HEK293T (cell line): ENCODE measurements at regions of chr1 and their contacts with region 1.

Region 1: DNA sequence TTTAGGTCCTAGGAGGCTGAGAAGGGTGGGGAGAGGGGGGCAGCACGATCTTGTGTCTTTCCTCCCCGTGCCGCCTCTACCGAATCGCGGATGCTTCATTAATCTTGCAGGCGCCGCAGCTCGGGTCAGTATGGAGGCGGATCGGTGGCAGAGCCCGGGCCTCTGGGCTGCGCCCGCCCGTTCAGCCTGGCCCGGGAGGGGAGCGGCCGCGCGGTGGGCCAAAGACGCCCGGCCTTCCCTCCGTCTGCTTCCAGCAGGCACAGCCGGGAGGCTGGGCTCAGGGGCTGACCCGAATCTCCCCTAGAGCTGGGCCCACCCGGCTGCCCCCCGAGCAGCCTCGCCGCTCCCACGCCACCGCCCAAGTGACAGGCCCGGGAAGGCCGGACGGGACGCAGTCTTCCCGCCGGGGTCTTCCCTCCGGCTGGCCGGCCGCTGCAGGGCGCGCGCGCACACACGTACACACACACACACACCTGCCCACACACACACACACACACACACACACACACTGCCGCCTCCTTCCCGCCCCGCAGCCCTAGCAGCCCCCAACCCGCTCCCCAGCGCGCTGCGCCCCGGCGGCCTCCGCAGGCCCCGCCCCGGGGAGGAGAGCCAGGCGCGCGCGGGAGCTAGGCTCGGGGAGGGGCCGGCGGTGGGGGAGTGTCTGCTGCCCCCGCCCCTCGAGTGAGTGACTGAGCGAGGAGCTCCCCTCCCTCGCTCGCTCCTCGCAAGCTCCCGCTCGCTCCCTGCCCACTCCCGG is at the start of gene C1orf21:
- DNase-seq: peak; percentile 91

Region 2: DNA sequence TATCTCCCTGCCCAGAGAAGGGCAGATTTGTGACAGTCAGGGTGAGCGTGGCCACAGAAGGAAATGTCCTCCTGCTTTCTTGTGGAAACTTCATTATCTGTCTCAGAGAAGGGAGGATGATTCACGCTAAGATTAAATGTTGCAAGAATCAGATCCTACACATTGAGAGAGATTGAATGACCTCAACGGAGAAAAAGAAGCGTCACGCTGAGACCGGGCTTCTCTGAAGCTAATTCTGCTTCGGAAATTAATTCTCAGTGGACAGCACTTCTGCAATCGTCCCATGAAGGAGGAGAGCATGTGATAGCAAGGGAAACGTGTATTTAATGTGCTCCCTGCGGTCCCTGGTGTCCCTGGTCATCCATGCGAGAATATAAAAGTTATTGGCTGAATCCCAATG is 19.5 kb before region 1 on chr1:
- CTCF ChIA-PET with region 1: interaction called, 10 read pairs
- POLR2A ChIA-PET with region 1: interaction called, 3 read pairs
- DNase-seq: no peak

Region 3: DNA sequence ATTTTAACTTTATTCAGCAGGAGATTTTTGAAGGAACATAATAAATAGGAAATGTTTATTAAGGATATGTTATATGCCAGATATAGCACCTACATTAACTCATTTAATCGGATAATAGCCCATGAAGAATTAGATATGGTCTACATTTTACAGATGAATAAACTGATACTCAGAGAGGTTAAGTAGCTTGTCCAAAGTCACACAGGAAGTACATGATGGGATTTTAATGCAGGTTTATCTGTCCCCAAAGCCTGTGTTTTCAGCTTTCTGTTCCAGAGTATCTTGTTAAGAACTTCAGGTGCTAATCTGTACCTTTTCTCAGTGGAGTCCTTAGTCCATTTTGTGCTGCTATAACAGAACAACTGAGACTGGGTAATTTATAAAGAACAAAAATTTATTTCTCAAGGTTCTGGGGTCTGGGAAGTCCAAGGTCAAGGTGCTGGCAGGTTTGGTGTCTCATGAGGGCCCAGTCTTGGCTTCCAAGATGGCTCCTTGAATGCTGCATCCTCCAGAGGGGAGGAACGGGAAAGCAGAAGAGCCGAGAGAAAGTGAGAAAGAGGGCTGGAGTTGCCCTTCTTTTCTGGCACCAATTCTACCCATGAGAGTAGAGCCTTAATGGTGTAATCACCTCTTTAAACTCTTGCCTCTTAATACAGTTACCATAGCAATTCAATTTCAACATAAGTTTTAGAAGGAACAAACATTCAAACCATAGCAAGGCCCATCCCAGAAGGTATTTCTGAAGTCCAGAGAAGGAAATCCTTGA is 17.7 kb after region 1 on chr1:
- CTCF ChIA-PET with region 1: no interaction called
- POLR2A ChIA-PET with region 1: interaction called, 14 read pairs
- DNase-seq: no peak